Spleen (tissue), 13 donors: ENCODE measurements at regions of chr2 and their contacts with region 1.

Region 1: DNA sequence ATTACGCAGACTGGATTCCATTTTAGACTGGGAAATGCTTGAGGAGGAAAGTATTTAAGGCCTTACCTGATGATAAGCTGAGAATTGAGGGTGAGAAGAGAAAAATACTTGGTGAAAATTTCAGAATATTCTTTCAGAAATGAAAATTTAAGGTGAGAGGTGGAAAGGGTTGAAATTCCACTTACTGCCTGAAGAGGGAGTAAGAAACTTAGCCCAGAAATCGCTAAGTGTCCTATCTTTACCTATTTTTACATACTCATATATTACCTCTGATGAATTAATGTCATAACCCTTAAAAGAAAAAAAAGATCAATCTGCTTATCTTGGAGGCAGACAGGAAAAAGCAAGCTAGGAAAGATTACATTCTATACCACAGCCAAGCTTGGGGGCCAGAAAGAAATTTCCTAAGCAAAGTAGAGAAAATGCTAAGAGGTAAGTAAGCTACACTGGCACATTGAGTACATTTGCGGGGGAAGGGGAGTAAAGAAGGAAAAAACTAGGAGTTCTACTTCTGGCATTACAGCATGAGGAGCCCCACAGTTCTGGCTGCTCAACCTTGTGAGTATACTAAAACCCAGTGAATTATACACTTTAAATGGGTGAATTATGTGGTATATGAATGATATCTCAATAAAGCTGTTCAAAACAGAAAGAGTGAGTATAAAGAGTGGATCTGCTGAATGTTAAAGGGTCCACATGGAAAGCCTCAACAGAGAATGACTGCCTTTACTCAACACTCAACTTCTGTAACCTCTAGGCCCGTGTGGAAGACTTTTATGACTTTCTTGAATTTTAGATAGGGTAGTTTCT is 33.8 kb downstream of the SMC6 start:
- DNase-seq: no peak
- H3K4me3 ChIP-seq: no peak overlapping the region
- H3K27ac ChIP-seq: no peak overlapping the region
- H3K4me1 ChIP-seq: no peaks in the 10 kb centered on the region
- H3K27me3 ChIP-seq: no peaks in the 10 kb centered on the region
- CTCF ChIP-seq: peak; percentile 50 to 85 (median 73)
- POLR2A ChIP-seq: no peak

Region 2: DNA sequence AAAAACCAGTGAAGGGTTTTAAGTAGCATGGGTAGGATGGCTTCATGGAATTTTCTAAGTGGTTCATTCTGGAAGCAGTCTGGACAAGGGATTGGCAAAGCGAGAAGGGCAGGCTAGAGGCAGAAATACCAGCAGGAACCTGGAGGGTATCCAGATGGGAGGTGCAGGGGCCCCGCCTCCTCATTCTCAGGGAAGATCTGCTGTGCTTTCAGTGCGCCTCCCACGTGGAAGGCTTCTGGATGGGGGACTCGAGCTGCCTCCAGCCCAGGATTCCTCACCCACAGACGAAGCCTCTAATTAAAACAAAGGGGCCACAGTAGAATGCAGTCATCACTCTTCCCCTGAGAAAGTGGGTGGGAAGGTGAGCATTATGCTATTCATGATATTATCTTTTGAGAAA is 99.5 kb before region 1 on chr2:
- intact Hi-C with region 1: no loop called
- DNase-seq: no peak
- H3K4me3 ChIP-seq: no peak overlapping the region
- H3K27ac ChIP-seq: no peak overlapping the region
- H3K4me1 ChIP-seq: no peaks in the 10 kb centered on the region
- H3K27me3 ChIP-seq: peaks cover 0 to 8% (median 0%) of the 10 kb centered on the region in 7 donors
- CTCF ChIP-seq: no peak
- POLR2A ChIP-seq: no peak

Region 3: GRCh38 chr2:17804358-17804757 is 84.6 kb after region 1 on chr2:
- intact Hi-C with region 1: no loop called
- DNase-seq: no peak
- H3K4me3 ChIP-seq: peak overlapping the region in 1 of 8 donors; percentile 6
- H3K27ac ChIP-seq: peak overlapping the region in 6 of 8 donors; percentile 17 to 75 (median 58)
- H3K4me1 ChIP-seq: peaks cover 0 to 39% (median 19%) of the 10 kb centered on the region in 6 donors
- H3K27me3 ChIP-seq: no peaks in the 10 kb centered on the region
- CTCF ChIP-seq: no peak
- POLR2A ChIP-seq: no peak

Region 4: GRCh38 chr2:17830053-17831034 is 110.6 kb after region 1 on chr2:
- intact Hi-C with region 1: loop called (anchors 10 kb)
- DNase-seq: peak; percentile 86
- H3K4me3 ChIP-seq: peak overlapping the region in 3 of 8 donors; percentile 1 to 52 (median 15)
- H3K27ac ChIP-seq: no peak overlapping the region
- H3K4me1 ChIP-seq: peaks cover 0 to 17% (median 9%) of the 10 kb centered on the region in 6 donors
- H3K27me3 ChIP-seq: peaks cover 0 to 17% (median 0%) of the 10 kb centered on the region in 7 donors
- CTCF ChIP-seq: peak; percentile 27 to 85 (median 67)
- POLR2A ChIP-seq: no peak